Activated CD8-positive, alpha-beta memory T cell treated with anti-CD3 and anti-CD28 coated beads, Interleukin-2, amount 10 ng/mL, durations not matched to agents 7 days and 5 days (primary cell): ENCODE measurements at regions of chr17 and their contacts with region 1.

Region 1: GRCh38 chr17:17280613-17281549 is at the start of gene COPS3:
- DNase-seq: peak; percentile 99
- ATAC-seq: peak; percentile 96
- H3K4me3 Mint-ChIP-seq: peak within 1 kb of the TSS; percentile 94
- H3K27ac Mint-ChIP-seq: peak within 1 kb of the TSS; percentile 93
- H3K4me1 Mint-ChIP-seq: peaks cover 36% of the 10 kb centered on the region
- H3K27me3 Mint-ChIP-seq: no peaks in the 10 kb centered on the region
- total RNA-seq, gene COPS3: 93.9 to 125 TPM

Region 2: GRCh38 chr17:17075038-17075781 is 205.7 kb before region 1 on chr17:
- CTCF ChIA-PET with region 1: no interaction called
- DNase-seq: no peak
- ATAC-seq: peak; percentile 27
- H3K4me3 Mint-ChIP-seq: no peak overlapping the region
- H3K27ac Mint-ChIP-seq: no peak overlapping the region
- H3K4me1 Mint-ChIP-seq: peaks cover 24% of the 10 kb centered on the region
- H3K27me3 Mint-ChIP-seq: no peaks in the 10 kb centered on the region

Region 3: GRCh38 chr17:17269926-17270773 is 10.7 kb before region 1 on chr17:
- CTCF ChIA-PET with region 1: interaction called, 24 read pairs
- DNase-seq: peak; percentile 53
- ATAC-seq: no peak
- H3K4me3 Mint-ChIP-seq: no peak overlapping the region
- H3K27ac Mint-ChIP-seq: no peak overlapping the region
- H3K4me1 Mint-ChIP-seq: peaks cover 2% of the 10 kb centered on the region
- H3K27me3 Mint-ChIP-seq: no peaks in the 10 kb centered on the region

Region 4: DNA sequence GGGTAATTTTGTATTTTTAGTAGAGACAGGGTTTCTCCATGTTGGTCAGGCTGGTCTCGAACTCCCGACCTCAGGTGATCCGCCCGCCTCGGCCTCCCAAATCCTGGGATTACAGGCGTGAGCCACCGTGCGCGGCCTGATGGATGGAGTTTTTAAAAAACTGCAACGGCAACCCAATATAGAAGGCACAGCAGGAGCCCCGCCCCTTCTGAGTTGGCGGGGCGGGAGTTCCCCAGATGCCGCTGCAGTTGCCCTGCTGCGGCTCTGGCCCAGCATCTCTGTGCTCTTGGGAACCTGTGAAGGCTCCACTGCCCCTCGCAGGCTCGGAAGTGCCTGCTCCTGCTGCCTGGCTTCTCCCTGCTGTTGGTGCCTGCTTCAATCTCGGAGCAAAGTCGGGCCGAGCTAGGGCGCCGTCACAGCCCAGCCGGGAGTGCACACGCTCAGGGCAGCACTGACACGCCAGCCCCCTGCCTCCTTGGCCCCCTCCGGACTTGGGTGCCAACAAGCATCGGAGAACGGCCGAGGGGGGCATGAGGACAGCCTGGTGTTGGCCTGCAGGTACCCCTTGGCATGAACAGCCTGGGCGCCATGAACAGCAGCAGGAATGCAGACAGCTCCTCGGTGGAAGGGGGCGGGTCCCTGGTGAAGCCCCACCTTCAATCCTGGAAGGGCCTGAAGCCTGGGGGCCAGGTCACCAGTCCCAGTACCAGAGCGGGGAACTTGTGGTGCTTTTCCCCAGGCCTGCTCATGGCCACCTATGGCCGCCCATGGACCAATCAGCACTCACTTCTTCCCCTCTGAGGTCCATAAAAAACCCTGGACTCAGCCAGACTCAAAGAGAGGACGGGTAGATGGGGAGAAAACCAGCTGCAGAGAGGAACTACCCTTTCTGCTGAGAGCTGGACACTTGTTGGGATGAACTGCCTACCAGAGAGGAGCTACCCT is 20.0 kb after region 1 on chr17:
- CTCF ChIA-PET with region 1: interaction called, 10 read pairs
- DNase-seq: peak; percentile 62
- ATAC-seq: peak; percentile 31
- H3K4me3 Mint-ChIP-seq: peak overlapping the region; percentile 56
- H3K27ac Mint-ChIP-seq: peak overlapping the region; percentile 15
- H3K4me1 Mint-ChIP-seq: peaks cover 49% of the 10 kb centered on the region
- H3K27me3 Mint-ChIP-seq: peaks cover 2% of the 10 kb centered on the region